CD4-positive, alpha-beta T cell (primary cell): ENCODE measurements at regions of chr3 and their contacts with region 1.

Region 1: DNA sequence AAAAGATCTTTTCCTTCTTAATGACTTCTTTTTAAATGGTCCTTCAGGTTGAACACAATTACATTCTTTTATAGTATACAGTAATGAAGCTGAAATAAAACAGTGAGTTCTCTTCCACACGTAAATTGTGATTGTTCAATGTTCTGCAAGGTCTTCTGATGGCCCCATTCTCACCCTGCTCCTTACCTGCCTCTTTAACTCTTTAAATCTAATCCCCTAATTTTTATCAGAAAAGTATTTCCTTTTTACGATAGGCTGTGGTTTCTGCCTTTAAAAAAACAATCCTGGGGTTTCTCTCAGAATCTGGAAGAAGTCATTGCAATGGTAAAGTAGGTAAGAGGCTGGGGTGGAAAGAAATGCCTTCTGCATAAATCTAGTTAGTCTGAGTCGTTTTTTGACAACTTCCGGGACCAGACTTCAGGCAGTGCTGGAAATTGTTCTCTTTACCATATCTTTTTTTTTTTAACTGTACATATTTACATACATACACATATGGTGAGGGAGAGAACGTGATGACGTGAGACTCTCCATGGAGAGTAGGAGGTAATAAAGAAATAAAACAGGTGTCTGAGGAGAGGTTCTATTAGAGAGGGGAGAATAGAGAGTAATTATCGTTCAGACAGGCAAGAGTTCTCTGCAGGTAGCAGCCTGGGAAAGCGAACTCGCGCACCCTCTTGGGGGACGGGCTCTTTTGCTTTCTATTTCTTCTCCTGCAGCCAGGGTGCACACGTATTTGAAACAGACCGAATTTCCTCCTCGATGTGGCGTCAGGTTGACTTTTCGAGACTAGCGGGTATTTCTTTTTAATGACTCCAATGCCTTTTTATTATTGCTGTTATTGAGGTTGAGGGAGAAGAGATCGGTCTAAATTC is at the start of gene SIDT1:
- DNase-seq: peak; percentile 56 to 89 (median 68)
- ATAC-seq: peak; percentile 78
- H3K4me3 ChIP-seq: peak within 1 kb of the TSS; percentile 86
- H3K4me3 Mint-ChIP-seq: peak within 1 kb of the TSS; percentile 98
- H3K27ac ChIP-seq: peak within 1 kb of the TSS; percentile 89 to 94
- H3K27ac Mint-ChIP-seq: peak within 1 kb of the TSS; percentile 98
- H3K4me1 ChIP-seq: peaks cover 32% of the 10 kb centered on the region
- H3K4me1 Mint-ChIP-seq: peaks cover 70% of the 10 kb centered on the region
- H3K27me3 ChIP-seq: no peaks in the 10 kb centered on the region
- H3K27me3 Mint-ChIP-seq: no peaks in the 10 kb centered on the region
- CTCF ChIP-seq: peak; percentile 13
- total RNA-seq, gene SIDT1: 28.8 to 37.3 TPM

Region 2: DNA sequence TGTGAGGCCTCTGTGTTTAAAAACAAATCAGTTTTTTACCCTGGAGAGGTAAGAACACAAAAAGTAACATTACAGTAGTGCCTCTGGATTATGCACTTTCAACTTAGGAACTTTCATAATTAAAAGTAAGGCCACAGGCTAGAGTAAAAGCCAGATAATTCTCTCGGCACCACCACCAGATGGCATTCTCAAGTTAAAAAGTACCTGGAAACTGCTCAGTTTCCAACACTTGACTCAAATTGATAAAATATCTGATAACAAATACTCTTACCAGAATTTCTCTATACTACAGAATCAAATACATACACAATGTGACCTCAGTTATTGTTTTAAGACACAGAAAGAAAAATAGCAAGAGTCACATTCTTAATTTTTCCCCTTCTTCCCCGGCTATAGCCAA is 37.0 kb before region 1 on chr3:
- CTCF ChIA-PET with region 1: interaction called, 3 read pairs
- POLR2A ChIA-PET with region 1: interaction called, 3 read pairs
- intact Hi-C with region 1: loop called in 1 of 2 experiments (anchors 1 kb)
- DNase-seq: peak in 12 of 14 experiments; percentile 10 to 68 (median 32)
- ATAC-seq: peak; percentile 66
- H3K4me3 ChIP-seq: no peak overlapping the region
- H3K4me3 Mint-ChIP-seq: no peak overlapping the region
- H3K27ac ChIP-seq: no peak overlapping the region
- H3K27ac Mint-ChIP-seq: no peak overlapping the region
- H3K4me1 ChIP-seq: no peaks in the 10 kb centered on the region
- H3K4me1 Mint-ChIP-seq: peaks cover 4% of the 10 kb centered on the region
- H3K27me3 ChIP-seq: no peaks in the 10 kb centered on the region
- H3K27me3 Mint-ChIP-seq: no peaks in the 10 kb centered on the region
- CTCF ChIP-seq: peak; percentile 45

Region 3: DNA sequence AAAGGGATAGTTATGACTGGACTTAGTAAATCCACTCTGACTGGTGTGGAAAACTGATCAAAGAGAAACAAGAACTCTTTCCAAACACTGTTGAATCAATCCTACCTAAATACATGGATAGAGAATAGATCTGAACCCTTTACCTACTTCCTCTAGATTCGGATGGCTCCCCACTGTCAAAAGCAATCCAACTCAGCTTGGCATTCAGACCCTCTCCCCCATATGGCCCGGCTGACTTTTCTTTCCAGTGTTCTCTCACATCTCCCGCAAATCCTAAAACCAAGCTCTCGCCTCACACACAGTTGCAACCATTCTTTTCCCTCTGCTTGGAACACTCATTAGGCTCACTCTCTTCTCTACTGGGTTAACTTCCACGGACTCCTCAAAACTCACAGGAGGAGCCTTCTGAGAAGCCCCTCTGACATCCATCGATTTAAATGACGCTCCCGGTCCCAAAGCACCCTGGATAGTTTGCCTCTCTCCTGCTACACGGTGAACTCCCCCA is 17.7 kb before region 1 on chr3:
- CTCF ChIA-PET with region 1: interaction called, 5 read pairs
- POLR2A ChIA-PET with region 1: interaction called, 77 read pairs
- intact Hi-C with region 1: loop called (anchors 1 kb)
- DNase-seq: peak in 1 of 14 experiments; percentile 6
- ATAC-seq: peak; percentile 0
- H3K4me3 ChIP-seq: peak overlapping the region; percentile 82
- H3K4me3 Mint-ChIP-seq: no peak overlapping the region
- H3K27ac ChIP-seq: peak overlapping the region; percentile 87 to 93
- H3K27ac Mint-ChIP-seq: no peak overlapping the region
- H3K4me1 ChIP-seq: peaks cover 18% of the 10 kb centered on the region
- H3K4me1 Mint-ChIP-seq: peaks cover 7% of the 10 kb centered on the region
- H3K27me3 ChIP-seq: no peaks in the 10 kb centered on the region
- H3K27me3 Mint-ChIP-seq: peaks cover 16% of the 10 kb centered on the region
- CTCF ChIP-seq: no peak

Region 4: DNA sequence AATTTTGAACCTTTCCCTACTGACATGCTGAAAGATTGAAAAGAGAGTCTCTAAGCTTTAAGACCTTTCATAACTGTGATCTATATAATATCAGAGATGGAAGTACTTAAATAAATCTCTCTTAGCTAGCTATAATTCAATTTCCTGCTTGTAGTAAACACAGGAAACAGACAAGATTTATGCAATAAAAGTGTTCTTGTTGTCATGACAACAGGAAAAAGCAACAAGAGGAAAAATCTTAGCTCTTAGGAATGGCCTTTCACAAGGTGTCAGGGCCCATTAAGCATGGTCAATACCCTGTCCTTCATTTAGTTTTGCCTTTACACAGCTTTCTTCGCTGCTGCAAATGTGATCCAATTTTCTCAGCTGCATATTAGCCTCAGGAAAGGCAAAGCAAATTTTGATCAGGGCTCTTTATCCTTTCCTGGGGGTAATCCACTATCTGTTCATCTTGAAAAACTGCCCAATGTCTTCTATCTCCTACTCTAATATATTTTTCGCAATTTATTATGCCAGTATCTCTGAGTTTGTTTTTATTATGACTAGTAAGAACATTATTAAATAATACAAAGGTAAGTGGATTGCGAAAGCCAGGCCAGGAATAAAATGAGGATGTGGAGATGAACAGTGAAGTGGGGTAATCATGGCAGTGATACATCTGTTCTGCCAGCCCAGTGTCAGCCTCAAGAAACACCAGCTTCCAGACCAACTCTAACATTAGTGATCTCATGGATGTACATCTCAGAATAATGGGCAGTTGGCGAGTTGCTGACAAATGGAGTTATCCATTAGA is 29.0 kb after region 1 on chr3:
- CTCF ChIA-PET with region 1: no interaction called
- POLR2A ChIA-PET with region 1: interaction called, 14 read pairs
- intact Hi-C with region 1: no loop called
- DNase-seq: peak in 3 of 14 experiments; percentile 51 to 69 (median 58)
- ATAC-seq: peak; percentile 57
- H3K4me3 ChIP-seq: no peak overlapping the region
- H3K4me3 Mint-ChIP-seq: peak overlapping the region; percentile 36
- H3K27ac ChIP-seq: peak overlapping the region in 1 of 2 donors; percentile 14
- H3K27ac Mint-ChIP-seq: peak overlapping the region; percentile 83
- H3K4me1 ChIP-seq: peaks cover 24% of the 10 kb centered on the region
- H3K4me1 Mint-ChIP-seq: peaks cover 72% of the 10 kb centered on the region
- H3K27me3 ChIP-seq: no peaks in the 10 kb centered on the region
- H3K27me3 Mint-ChIP-seq: no peaks in the 10 kb centered on the region
- CTCF ChIP-seq: no peak

Region 5: DNA sequence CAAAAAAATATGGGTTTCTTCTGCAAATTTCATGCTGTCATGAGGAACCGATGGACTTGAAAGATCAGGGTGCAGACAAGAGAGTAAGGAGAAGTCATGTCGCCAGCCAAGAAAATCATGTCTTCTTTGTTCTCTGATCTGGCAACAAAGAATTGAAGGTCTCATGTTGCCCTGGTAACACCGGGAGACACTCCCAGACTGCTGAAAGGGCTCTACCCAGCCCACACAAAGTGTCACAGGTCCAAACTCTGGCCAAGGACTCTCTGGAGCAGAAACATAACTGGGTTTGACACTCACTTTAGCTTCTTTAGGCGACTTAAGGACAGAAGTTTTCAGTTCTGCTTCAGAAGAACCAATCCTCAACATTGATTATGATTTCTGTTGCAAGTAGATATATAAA is 43.1 kb after region 1 on chr3:
- CTCF ChIA-PET with region 1: interaction called, 5 read pairs
- POLR2A ChIA-PET with region 1: no interaction called
- intact Hi-C with region 1: loop called in 1 of 2 experiments (anchors 5 kb)
- DNase-seq: no peak
- ATAC-seq: no peak
- H3K4me3 ChIP-seq: no peak overlapping the region
- H3K4me3 Mint-ChIP-seq: no peak overlapping the region
- H3K27ac ChIP-seq: no peak overlapping the region
- H3K27ac Mint-ChIP-seq: peak overlapping the region; percentile 27
- H3K4me1 ChIP-seq: no peaks in the 10 kb centered on the region
- H3K4me1 Mint-ChIP-seq: peaks cover 5% of the 10 kb centered on the region
- H3K27me3 ChIP-seq: no peaks in the 10 kb centered on the region
- H3K27me3 Mint-ChIP-seq: no peaks in the 10 kb centered on the region
- CTCF ChIP-seq: no peak

Region 6: GRCh38 chr3:113696658-113697499 is 164.8 kb after region 1 on chr3:
- CTCF ChIA-PET with region 1: no interaction called
- POLR2A ChIA-PET with region 1: interaction called, 5 read pairs
- intact Hi-C with region 1: loop called in 1 of 2 experiments (anchors 5 kb)
- DNase-seq: peak; percentile 96 to 100 (median 98)
- ATAC-seq: peak; percentile 87
- H3K4me3 ChIP-seq: peak overlapping the region; percentile 78
- H3K4me3 Mint-ChIP-seq: no peak overlapping the region
- H3K27ac ChIP-seq: peak overlapping the region; percentile 87
- H3K27ac Mint-ChIP-seq: no peak overlapping the region
- H3K4me1 ChIP-seq: peaks cover 23% of the 10 kb centered on the region
- H3K4me1 Mint-ChIP-seq: peaks cover 23% of the 10 kb centered on the region
- H3K27me3 ChIP-seq: no peaks in the 10 kb centered on the region
- H3K27me3 Mint-ChIP-seq: no peaks in the 10 kb centered on the region
- CTCF ChIP-seq: no peak

Region 7: GRCh38 chr3:113977822-113978221 is 445.8 kb after region 1 on chr3:
- CTCF ChIA-PET with region 1: no interaction called
- POLR2A ChIA-PET with region 1: no interaction called
- intact Hi-C with region 1: no loop called
- DNase-seq: no peak
- ATAC-seq: no peak
- H3K4me3 ChIP-seq: no peak overlapping the region
- H3K4me3 Mint-ChIP-seq: no peak overlapping the region
- H3K27ac ChIP-seq: no peak overlapping the region
- H3K27ac Mint-ChIP-seq: no peak overlapping the region
- H3K4me1 ChIP-seq: no peaks in the 10 kb centered on the region
- H3K4me1 Mint-ChIP-seq: no peaks in the 10 kb centered on the region
- H3K27me3 ChIP-seq: no peaks in the 10 kb centered on the region
- H3K27me3 Mint-ChIP-seq: no peaks in the 10 kb centered on the region
- CTCF ChIP-seq: no peak

Region 8: GRCh38 chr3:114056130-114057010 is 524.3 kb after region 1 on chr3 and contains the starts of genes CCDC191 and QTRT2:
- CTCF ChIA-PET with region 1: no interaction called
- POLR2A ChIA-PET with region 1: no interaction called
- intact Hi-C with region 1: loop called in 1 of 2 experiments (anchors 10 kb)
- DNase-seq: peak; percentile 93 to 100 (median 97)
- ATAC-seq: peak; percentile 95
- H3K4me3 ChIP-seq: peak within 1 kb of the TSS; percentile 88
- H3K4me3 Mint-ChIP-seq: peak within 1 kb of the TSS; percentile 95
- H3K27ac ChIP-seq: peak within 1 kb of the TSS; percentile 87 to 96
- H3K27ac Mint-ChIP-seq: peak within 1 kb of the TSS; percentile 94
- H3K4me1 ChIP-seq: peaks cover 18% of the 10 kb centered on the region
- H3K4me1 Mint-ChIP-seq: peaks cover 53% of the 10 kb centered on the region
- H3K27me3 ChIP-seq: no peaks in the 10 kb centered on the region
- H3K27me3 Mint-ChIP-seq: no peaks in the 10 kb centered on the region
- CTCF ChIP-seq: no peak
- total RNA-seq, gene CCDC191: 3.6 to 3.7 TPM
- total RNA-seq, gene QTRT2: 22.8 to 27.0 TPM